SK-N-SH (cell line): ENCODE measurements at regions of chr1 and their contacts with region 1.

Region 1: DNA sequence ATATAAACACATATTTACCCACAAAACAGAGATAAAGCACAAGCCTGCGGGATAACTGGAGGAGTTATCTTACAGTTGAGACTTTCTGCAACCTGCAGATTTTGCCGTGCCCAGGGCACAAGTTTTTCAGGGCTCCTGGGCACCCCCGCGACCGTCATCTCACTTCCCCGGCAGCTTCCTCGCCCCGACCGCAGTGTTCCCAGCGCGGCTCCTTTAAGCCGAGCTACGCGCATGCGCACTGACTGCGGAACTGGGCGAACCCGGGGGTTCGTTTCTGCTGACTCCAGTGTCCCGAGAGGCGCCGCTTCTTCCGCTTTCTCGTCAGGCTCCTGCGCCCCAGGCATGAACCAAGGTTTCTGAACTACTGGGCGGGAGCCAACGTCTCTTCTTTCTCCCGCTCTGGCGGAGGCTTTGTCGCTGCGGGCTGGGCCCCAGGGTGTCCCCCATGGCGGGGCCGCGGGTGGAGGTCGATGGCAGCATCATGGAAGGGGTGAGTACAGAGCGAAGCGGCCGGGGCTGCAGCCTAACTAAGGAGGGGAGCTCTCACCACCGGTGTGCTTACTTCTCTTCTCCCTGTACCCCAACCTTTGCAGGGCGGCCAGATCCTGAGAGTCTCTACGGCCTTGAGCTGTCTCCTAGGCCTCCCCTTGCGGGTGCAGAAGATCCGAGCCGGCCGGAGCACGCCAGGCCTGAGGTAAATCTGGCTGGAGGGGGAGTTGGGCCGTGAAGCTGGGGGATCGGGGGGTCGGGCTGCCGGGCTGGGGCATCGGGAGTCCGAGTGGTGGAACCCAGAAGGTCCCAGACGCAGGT is at the start of gene RTCA:
- DNase-seq: peak; percentile 94
- H3K4me3 ChIP-seq: peak within 1 kb of the TSS; percentile 90 to 100
- H3K27ac ChIP-seq: peak within 1 kb of the TSS; percentile 72 to 75
- H3K4me1 ChIP-seq: peaks cover 5 to 11% of the 10 kb centered on the region in 2 experiments; a peak in 3 of 4 replicates
- H3K27me3 ChIP-seq: no peaks in the 10 kb centered on the region
- CTCF ChIP-seq: no peak
- EP300 ChIP-seq: no peak
- RAD21 ChIP-seq: no peak; the same call in 1 of the 2 replicates
- polyA plus RNA-seq, gene RTCA: 17.3 and 24.3 TPM in 2 replicates

Region 2: DNA sequence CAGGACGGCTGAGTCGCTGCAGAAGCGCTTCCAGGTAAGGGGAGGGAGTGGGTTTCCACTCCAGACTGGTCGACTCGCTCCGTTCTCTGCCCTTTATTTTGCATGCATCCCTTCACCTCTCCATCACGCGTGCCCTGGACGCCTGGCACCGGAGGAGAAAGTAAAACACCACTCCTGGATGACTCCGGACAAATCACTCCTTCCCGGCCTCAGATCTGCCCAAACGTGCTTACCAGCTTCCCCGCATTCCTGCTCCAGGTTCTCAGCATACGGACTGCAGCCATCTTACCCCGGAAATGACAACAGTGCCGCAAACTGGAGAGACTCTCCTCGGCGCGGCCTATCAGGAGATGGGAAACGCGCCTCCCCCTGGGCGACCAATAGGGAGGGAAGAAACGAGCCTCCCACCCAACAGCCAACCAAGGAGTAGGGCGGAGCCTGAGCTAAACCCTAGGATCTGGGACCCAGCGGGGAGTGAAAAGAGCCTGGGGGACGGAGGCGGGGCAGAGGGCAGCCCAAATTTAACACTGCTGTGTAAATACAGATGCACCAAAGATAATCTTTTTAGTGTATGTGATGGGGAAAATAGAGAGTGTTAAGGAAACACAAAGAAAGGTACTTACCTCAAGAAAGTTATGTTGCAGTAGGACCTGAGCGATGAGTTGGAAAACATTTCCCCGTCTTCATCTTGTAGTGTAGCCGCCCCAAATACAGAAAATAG is 16.4 kb before region 1 on chr1 and contains the start of gene DBT:
- CTCF ChIA-PET with region 1: interaction called, 3 read pairs
- POLR2A ChIA-PET with region 1: interaction called, 17 read pairs
- DNase-seq: peak; percentile 89
- H3K4me3 ChIP-seq: peak within 1 kb of the TSS; percentile 73 to 91
- H3K27ac ChIP-seq: peak within 1 kb of the TSS; percentile 59 to 94
- H3K4me1 ChIP-seq: peaks cover 8 to 10% of the 10 kb centered on the region in 2 experiments; a peak in 3 of 4 replicates
- H3K27me3 ChIP-seq: no peaks in the 10 kb centered on the region
- CTCF ChIP-seq: no peak
- EP300 ChIP-seq: peak in 1 of 2 experiments; percentile 24; a peak in 1 of 4 replicates
- RAD21 ChIP-seq: no peak
- polyA plus RNA-seq, gene DBT: 2.0 and 3.6 TPM in 2 replicates

Region 3: DNA sequence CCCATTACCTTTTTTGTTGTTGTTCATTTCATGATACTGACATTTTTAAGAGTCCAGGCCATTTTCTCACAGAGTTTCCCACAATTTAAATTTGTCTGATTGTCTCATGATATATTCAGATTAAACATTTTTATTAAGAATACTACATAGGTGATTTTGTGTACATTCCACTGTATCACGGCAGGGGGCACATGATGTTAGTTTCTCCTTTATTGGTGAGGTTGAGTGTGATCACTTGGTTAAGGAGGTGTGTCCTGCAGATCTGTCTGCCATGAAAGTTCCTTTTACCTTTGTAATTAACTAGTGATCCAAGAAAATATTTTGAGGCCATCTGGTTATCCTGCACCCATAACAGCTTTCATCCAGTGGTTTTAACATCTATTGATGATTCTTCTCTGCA is 11.7 kb after region 1 on chr1:
- CTCF ChIA-PET with region 1: no interaction called
- POLR2A ChIA-PET with region 1: no interaction called
- DNase-seq: no peak
- H3K4me3 ChIP-seq: no peak overlapping the region
- H3K27ac ChIP-seq: no peak overlapping the region
- H3K4me1 ChIP-seq: no peaks in the 10 kb centered on the region
- H3K27me3 ChIP-seq: no peaks in the 10 kb centered on the region
- CTCF ChIP-seq: no peak
- EP300 ChIP-seq: no peak
- RAD21 ChIP-seq: no peak